ENCODE measurements at regions of chr3 and their contacts with region 1.

Region 1: GRCh38 chr3:127822698-127823425 is 547 bp upstream of the MGLL start:
- DNase-seq: peak; percentile 75 to 79
- ATAC-seq: peak; percentile 74

Region 2: DNA sequence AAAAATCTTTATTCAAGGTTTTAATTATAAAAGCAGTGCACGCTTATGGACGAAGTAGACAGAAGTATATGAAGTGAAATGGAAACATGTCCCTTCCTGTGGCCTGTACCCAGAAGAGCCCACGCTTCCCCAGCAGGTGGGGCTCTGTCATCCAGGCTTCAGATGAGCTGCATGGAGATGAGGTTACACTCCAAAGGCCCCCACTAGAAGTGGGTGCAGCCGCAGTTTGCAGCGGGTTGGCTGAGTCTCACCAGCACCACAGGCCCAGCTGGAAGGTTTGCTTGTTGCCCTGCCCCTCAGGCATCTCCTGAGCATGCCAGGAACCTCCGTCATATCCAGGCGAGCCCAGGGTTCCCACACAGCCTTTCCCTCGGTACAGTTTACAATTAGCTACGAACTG is 568.1 kb before region 1 on chr3:
- intact Hi-C with region 1: no loop called
- DNase-seq: peak in 1 of 2 donors; percentile 13
- ATAC-seq: peak; percentile 49

Region 3: DNA sequence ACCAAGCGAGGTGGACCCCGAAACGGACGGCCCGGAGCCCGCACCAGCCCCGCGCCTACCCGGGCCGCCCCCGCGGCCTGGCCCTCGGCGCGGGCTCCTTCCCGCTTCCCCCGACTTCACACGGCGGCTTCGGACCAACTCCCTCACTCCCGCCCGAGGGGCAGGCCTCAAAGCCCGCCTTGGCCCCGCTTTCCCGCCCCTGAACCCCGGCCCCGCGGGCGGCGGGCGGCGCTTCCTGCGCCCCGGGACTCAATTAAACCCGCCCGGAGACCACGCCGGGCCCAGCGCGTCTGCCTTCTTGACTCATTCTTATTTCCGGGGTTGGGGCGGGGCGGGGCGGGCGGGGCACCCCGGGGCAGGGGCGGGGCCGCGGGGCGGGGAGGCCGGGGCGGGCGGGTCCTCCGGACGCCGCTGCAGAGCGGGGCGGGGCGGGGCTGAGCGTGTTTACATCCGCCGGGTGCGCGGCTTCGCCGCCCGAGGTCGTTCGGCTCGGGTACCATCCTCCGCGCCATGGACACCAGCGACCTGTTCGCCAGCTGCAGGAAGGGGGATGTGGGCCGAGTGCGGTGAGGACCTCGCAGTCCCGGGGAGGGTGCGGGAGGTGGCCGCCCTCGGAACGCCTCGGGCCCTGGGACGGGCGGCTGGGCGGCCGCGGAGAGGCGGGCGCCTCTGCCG is 150.2 kb before region 1 on chr3 and contains the start of gene ABTB1:
- intact Hi-C with region 1: loop called in 1 of 2 experiments (anchors 10 kb)
- DNase-seq: peak; percentile 87 to 95
- ATAC-seq: peak; percentile 86
- total RNA-seq, gene ABTB1: 15.2 to 28.6 TPM

Region 4: DNA sequence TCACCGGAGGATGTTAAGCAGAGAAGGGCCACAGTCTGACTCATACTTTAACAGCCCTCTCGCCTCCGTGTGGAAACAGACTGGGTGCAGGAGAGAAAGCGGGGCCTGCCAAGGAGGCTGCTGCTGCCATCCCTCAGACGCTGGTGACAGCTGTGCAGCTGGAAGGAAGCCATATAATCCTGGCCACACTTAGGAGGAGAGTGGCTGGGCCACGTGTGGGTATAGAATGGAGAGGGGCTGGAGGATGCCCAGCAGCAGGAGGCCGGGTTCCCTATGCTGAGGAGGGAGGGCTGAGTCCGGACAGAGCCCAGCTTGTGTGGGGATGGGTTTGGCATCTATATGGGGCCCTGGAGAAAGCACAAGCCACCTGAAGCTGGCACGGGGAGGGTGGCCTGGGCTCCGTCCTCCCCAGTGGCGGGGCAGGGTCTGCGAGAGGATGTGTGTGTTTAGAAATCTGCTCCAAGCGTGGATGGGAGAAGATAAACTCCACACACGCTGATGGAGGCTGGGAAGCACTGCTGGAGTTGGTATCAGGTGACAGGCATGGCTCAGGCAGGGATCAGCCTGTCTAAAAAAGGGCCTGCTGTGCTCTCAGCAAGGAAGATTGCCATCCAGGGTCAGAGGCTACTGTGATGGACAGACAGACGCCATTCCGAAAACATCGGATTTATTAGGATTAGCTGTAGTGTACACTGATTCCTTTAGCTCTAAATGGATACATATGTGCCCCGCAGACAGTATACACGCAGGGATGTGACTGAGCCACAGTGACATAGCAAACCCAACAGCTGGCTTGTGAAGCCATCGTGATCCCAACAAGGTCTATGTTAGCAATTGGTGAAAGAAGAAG is 134.2 kb before region 1 on chr3:
- intact Hi-C with region 1: loop called in 1 of 2 experiments (anchors 10 kb)
- DNase-seq: peak; percentile 12 to 62
- ATAC-seq: peak; percentile 22

Region 5: DNA sequence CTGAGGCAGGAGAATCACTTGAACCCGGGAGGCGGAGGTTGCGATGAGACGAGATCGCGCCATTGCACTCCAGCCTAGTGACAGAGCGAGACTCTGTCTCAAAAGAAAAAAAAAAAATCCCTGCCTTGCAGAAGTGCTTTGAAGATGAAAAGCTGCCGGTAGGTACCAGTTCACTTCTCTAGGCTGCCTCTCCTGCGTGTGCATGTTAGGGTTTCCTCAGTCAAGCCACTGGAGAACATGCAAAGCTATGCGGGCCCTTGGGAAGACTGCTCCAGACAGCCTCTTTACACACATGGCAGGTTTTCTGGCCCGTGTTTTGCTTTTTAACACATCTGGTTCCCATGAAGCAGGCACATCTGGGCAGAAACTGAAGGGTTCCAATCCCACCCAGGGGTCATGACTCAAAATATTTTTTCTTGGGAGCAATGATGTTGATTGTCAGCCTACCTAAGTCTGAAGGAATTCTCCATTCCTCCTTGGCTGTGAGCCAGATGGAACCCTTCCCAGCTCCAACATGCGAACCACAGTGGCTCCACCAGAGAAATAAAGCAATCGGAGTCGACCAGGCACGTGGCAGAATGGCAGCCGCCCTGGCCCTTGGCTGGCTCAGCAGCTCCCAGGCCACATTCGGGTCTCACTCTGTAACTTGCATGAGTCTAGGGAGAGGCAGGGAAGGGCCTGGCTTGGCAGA is 30.1 kb before region 1 on chr3:
- intact Hi-C with region 1: loop called in 1 of 2 experiments (anchors 2 kb)
- DNase-seq: peak in 1 of 2 donors; percentile 55
- ATAC-seq: peak; percentile 34